ENCODE measurements at regions of chr18 and their contacts with region 1.

Region 1: GRCh38 chr18:63470751-63471150 is 6.0 kb upstream of the SERPINB5 start:
- DNase-seq: peak; percentile 93
- H3K4me3 Mint-ChIP-seq: peak overlapping the region; percentile 58
- H3K27ac Mint-ChIP-seq: peak overlapping the region; percentile 87
- H3K4me1 Mint-ChIP-seq: peaks cover 28% of the 10 kb centered on the region
- H3K27me3 Mint-ChIP-seq: no peaks in the 10 kb centered on the region
- CTCF ChIP-seq: no peak

Region 2: DNA sequence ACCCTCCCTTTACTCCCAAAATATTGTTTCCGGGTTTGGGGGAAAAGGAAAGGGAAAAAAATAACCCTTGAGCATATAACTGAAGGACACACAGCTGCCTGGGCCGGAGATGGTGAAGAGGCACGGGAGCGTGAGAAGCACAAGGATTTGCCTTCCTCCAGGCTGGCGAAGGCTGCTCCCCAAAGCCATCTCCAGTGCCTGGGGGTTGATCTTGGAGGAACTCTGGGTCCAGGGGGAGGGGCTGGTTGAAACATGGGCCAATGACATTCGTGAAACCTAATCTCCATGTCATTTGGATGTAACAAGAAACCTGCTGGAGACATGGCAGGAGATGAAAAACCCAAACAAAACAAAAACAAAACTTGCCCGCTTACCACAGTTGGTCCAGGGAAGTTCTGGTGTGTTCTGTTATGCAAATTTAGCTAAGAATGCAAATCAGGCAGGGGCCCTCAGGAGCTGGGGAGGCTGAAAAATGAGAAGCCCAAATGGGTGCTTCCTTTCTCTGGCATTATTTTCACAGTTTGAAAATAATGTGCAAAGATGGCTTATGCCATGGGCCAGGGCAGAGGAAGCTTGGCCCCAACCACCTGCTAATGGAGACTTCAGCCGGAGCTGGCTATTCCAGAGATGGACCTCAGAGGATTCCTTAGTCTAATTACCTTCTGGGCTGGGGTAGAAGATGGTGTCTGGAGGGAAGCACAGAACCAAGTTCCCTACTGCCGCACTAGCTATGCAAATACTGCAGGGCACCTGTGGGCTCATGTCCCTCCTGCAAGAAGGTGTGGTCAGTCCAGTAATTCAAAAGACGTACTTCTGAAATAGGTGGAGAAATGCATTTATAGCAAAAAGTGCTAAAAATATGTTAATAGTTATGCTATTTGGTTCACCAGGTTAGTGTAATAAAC is 332.1 kb before region 1 on chr18:
- CTCF ChIA-PET with region 1: no interaction called
- POLR2A ChIA-PET with region 1: no interaction called
- intact Hi-C with region 1: no loop called
- DNase-seq: no peak
- H3K4me3 Mint-ChIP-seq: no peak overlapping the region
- H3K27ac Mint-ChIP-seq: no peak overlapping the region
- H3K4me1 Mint-ChIP-seq: no peaks in the 10 kb centered on the region
- H3K27me3 Mint-ChIP-seq: peaks cover 22% of the 10 kb centered on the region
- CTCF ChIP-seq: no peak

Region 3: GRCh38 chr18:63457987-63458386 is 12.8 kb before region 1 on chr18:
- CTCF ChIA-PET with region 1: interaction called, 4 read pairs
- POLR2A ChIA-PET with region 1: interaction called, 151 read pairs
- intact Hi-C with region 1: no loop called
- DNase-seq: no peak
- H3K4me3 Mint-ChIP-seq: no peak overlapping the region
- H3K27ac Mint-ChIP-seq: no peak overlapping the region
- H3K4me1 Mint-ChIP-seq: peaks cover 27% of the 10 kb centered on the region
- H3K27me3 Mint-ChIP-seq: no peaks in the 10 kb centered on the region
- CTCF ChIP-seq: no peak

Region 4: GRCh38 chr18:63897072-63897471 is 426.3 kb after region 1 on chr18:
- CTCF ChIA-PET with region 1: no interaction called
- POLR2A ChIA-PET with region 1: no interaction called
- intact Hi-C with region 1: no loop called
- DNase-seq: peak; percentile 43
- H3K4me3 Mint-ChIP-seq: no peak overlapping the region
- H3K27ac Mint-ChIP-seq: no peak overlapping the region
- H3K4me1 Mint-ChIP-seq: peaks cover 4% of the 10 kb centered on the region
- H3K27me3 Mint-ChIP-seq: no peaks in the 10 kb centered on the region
- CTCF ChIP-seq: no peak